ENCODE measurements at regions of chr7 and their contacts with region 1.

Region 1: DNA sequence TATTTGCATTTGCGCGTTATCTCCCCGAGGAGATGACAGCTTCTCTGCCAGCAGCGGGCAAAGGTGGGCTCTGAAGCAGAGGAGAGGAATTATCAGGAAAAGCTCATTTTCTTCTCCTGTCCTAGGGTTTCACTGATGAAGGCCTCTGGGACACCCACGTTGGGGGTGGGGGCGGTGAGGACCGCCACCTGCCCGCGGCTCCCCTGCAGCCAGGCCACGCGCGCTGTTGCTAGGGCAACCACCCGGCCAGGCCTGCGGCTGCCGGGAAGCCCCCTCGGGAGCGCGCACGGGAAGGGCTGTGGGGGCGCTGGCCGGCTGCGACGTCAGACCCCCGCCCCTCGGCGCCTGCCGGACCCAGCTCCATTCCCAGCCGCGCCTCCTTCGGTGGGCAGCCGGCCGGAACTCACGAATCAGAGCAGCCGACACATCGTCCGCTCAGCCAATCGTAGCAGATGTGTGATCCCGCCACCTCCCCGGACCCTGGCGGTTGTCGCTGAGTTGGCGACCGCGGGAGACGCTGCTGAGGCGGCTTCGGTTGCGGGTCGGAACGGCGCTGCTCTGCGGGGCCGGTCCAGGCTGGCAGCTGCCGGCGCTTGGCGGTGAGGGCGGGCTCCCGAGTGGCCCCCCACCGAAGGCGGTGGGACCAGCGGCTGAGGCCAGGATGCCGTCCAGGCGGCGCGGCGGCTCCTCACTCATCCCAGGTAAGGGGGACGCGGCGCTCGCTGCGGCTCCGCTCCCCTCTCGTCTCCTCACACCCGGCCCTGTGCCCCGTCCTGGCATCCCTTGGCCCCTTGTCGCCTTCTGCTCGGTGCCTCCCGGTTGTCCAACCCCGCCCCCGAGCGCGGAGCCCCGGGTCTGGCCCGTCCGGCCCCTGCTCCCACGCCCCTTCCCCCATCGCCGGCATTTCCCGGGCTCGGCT is at the start of gene TPST1:
- DNase-seq: peak; percentile 97
- H3K4me3 ChIP-seq: peak within 1 kb of the TSS; percentile 70 to 71 (median 71)
- H3K27ac ChIP-seq: peak within 1 kb of the TSS; percentile 26
- H3K4me1 ChIP-seq: peaks cover 9% of the 10 kb centered on the region
- H3K27me3 ChIP-seq: no peaks in the 10 kb centered on the region
- CTCF ChIP-seq: peak; percentile 48 to 78
- POLR2A ChIP-seq: peak; percentile 93
- total RNA-seq, gene TPST1: 18.7 and 19.1 TPM in 2 replicates

Region 2: GRCh38 chr7:66413379-66414114 is 208.5 kb after region 1 on chr7:
- CTCF ChIA-PET with region 1: interaction called, 16 read pairs
- POLR2A ChIA-PET with region 1: no interaction called
- dilution Hi-C with region 1: no loop called
- intact Hi-C with region 1: loop called (anchors 2 kb)
- DNase-seq: peak; percentile 87
- H3K4me3 ChIP-seq: peak overlapping the region in 2 of 3 experiments; percentile 33 to 47
- H3K27ac ChIP-seq: peak overlapping the region; percentile 29
- H3K4me1 ChIP-seq: peaks cover 7% of the 10 kb centered on the region
- H3K27me3 ChIP-seq: no peaks in the 10 kb centered on the region
- CTCF ChIP-seq: peak; percentile 52 to 65
- POLR2A ChIP-seq: no peak

Region 3: GRCh38 chr7:66442385-66442784 is 237.3 kb after region 1 on chr7:
- CTCF ChIA-PET with region 1: no interaction called
- POLR2A ChIA-PET with region 1: no interaction called
- dilution Hi-C with region 1: no loop called
- intact Hi-C with region 1: no loop called
- DNase-seq: no peak
- H3K4me3 ChIP-seq: no peak overlapping the region
- H3K27ac ChIP-seq: no peak overlapping the region
- H3K4me1 ChIP-seq: peaks cover 12% of the 10 kb centered on the region
- H3K27me3 ChIP-seq: no peaks in the 10 kb centered on the region
- CTCF ChIP-seq: no peak
- POLR2A ChIP-seq: no peak